ENCODE measurements at regions of chr2 and their contacts with region 1.

Region 1: GRCh38 chr2:165203689-165204559 is at the start of gene SCN3A:
- DNase-seq: no peak
- H3K4me3 ChIP-seq: no peak within 1 kb of the TSS
- CTCF ChIP-seq: no peak
- POLR2A ChIP-seq: no peak
- total RNA-seq, gene SCN3A: 0.11 to 0.78 (median 0.26) TPM

Region 2: GRCh38 chr2:165015052-165015642 is 188.8 kb before region 1 on chr2:
- intact Hi-C with region 1: loop called (anchors 10 kb)
- DNase-seq: no peak
- H3K4me3 ChIP-seq: no peak overlapping the region
- CTCF ChIP-seq: no peak
- POLR2A ChIP-seq: no peak

Region 3: DNA sequence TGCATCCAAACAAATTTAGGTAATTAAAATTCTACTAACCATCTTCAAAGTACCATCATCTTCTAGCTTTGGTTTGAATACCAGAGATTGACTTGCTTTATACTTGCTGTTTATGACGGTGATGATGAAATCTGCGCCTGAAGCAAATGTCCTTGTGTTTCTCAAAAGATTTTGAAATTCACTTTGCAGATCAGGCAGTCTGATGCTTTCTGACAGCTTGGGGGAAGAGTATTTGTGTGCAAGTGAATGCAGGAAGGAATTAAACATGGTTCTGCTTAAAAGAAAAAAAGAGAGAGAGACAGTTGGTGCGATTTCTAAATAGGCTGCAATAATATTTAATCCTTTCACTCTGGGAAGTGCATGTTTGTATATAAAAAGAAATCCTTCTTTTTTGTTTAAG is 295.2 kb after region 1 on chr2:
- intact Hi-C with region 1: no loop called
- DNase-seq: no peak
- H3K4me3 ChIP-seq: no peak overlapping the region
- CTCF ChIP-seq: no peak
- POLR2A ChIP-seq: no peak

Region 4: DNA sequence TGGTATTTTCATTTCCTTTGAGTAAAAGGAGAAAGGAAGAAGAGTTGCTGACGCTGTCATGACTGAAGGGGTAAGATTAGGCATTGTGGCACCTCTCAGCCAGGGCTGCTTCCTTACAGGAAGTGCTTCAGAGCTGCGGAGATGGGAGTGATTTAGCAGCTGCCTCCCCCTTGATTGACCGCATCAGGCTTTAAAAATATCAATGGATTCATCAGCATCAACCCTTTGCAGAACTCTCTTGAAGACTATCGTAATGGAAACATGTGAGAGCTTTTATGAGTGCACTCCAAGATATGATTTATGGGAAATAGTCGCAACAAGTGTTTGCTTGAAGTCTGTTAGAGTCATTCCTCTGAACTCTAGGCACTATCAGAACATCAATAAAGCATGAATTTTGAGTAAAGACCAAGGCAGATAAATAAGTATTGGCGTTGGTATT is 406.7 kb after region 1 on chr2:
- intact Hi-C with region 1: no loop called
- DNase-seq: no peak
- H3K4me3 ChIP-seq: no peak overlapping the region
- CTCF ChIP-seq: no peak
- POLR2A ChIP-seq: no peak